Colonic mucosa (tissue), 4 donors: ENCODE measurements at regions of chr9 and their contacts with region 1.

Region 1: GRCh38 chr9:87497604-87498045 is at the start of gene DAPK1:
- DNase-seq: peak; percentile 68
- H3K4me3 ChIP-seq: peak within 1 kb of the TSS; percentile 70
- H3K27ac ChIP-seq: peak within 1 kb of the TSS; percentile 52
- H3K4me1 ChIP-seq: no peaks in the 10 kb centered on the region
- H3K27me3 ChIP-seq: peaks cover 9% of the 10 kb centered on the region
- CTCF ChIP-seq: no peak
- total RNA-seq, gene DAPK1: 7.9 to 17.5 TPM

Region 2: DNA sequence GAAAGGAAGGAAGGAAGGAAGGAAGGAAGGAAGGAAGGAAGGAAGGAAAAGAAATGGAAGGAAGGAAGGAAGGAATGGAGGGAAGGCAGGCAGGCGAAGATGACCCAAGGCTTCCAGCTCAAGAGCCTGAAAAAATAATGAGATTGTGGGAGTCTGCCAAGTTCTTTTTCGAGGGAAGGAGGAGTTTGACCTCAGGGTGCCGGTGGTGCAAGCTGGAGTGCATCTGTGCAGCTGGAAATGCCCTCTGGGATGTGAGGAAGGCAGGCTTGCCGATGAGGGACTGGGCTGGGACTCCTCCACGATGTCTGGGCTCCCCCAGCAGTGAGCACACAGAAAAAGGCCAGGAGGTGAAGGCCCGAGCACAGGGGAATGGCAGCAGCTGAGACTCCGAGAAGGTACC is 154.9 kb before region 1 on chr9:
- intact Hi-C with region 1: loop called (anchors 10 kb)
- DNase-seq: no peak
- H3K4me3 ChIP-seq: no peak overlapping the region
- H3K27ac ChIP-seq: no peak overlapping the region
- H3K4me1 ChIP-seq: no peaks in the 10 kb centered on the region
- H3K27me3 ChIP-seq: peaks cover 4% of the 10 kb centered on the region
- CTCF ChIP-seq: no peak

Region 3: GRCh38 chr9:87656485-87656884 is 158.9 kb after region 1 on chr9:
- intact Hi-C with region 1: loop called (anchors 5 kb)
- DNase-seq: no peak
- H3K4me3 ChIP-seq: no peak overlapping the region
- H3K27ac ChIP-seq: no peak overlapping the region
- H3K4me1 ChIP-seq: no peaks in the 10 kb centered on the region
- H3K27me3 ChIP-seq: no peaks in the 10 kb centered on the region
- CTCF ChIP-seq: no peak

Region 4: GRCh38 chr9:87753313-87753712 is 255.7 kb after region 1 on chr9:
- intact Hi-C with region 1: no loop called
- DNase-seq: no peak
- H3K4me3 ChIP-seq: no peak overlapping the region
- H3K27ac ChIP-seq: no peak overlapping the region
- H3K4me1 ChIP-seq: no peaks in the 10 kb centered on the region
- H3K27me3 ChIP-seq: no peaks in the 10 kb centered on the region
- CTCF ChIP-seq: no peak

Region 5: DNA sequence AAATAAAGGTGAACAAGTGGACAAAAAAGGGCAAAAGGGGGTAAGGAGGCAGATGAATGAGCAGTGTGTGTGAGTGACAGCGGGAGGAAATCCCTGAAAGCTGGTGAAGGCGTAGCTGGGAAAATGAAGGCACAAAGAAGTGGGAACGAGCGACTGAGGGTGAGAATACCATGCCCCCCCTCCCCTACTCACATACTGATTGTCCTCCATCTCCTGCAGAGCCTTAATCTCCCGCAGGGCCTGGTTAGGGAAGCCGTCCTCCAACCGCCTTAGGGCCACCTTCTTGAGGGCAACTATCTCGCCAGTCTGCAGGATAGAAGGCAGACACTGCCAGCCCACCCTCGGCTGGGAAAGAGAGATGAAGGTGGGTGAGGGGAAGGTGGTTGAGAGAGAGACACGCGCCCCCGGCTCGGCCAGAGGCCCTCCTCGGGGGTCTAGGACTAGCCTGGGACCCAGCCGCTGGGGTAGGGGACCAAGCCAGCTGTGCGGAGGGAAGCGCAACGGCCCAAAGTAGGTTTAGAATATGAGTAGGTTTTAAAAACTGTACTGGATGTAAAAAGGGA is 476.2 kb after region 1 on chr9:
- intact Hi-C with region 1: no loop called
- DNase-seq: no peak
- H3K4me3 ChIP-seq: peak overlapping the region; percentile 54
- H3K27ac ChIP-seq: no peak overlapping the region
- H3K4me1 ChIP-seq: no peaks in the 10 kb centered on the region
- H3K27me3 ChIP-seq: no peaks in the 10 kb centered on the region
- CTCF ChIP-seq: no peak